HCT116 (cell line): ENCODE measurements at regions of chr12 and their contacts with region 1.

Region 1: DNA sequence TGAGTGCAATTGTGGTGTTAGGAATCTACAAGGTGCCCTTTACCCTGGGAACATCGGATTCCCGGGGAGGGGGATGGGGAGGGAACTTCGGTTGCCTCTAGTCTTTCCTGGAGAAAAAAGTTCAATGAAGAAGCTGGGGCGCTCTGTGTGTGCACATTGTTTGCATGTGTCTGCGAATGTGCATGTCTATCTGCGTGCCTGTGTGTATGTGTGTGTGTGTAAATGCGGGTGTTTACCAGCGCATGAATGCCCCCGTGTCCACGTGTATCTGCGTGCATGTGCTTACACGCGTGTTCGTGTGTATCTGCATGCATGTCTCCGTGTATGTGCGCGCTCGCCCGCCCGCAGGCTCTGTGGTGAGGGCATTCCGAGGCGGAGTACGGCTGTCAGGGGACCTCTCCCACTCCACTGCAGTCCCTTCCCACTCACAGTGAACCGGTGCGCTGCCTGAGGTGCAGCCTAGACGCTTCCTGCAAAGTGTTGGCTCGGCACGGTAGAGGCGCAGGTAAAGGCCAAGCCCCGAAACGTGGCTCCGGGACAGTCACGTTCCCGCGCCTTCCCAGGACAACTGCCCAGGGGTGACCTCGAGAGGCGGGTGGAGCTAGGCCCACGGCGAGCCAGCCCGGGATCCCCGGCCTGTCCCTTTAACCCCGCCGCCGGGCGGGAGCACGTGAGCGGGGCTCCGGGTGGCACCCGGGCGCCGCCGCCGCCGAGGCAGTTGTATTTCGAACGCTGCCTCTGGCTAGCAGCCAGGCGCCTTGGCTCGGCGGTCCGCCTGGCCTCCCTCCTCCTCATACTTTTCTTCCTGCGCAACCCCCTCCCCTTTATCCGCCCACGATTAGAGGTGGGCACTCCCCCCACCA is 539 bp upstream of the HMGA2 start:
- DNase-seq: peak; percentile 74
- ATAC-seq: peak; percentile 65
- H3K4me3 ChIP-seq: peak overlapping the region; percentile 83 to 85
- H3K27ac ChIP-seq: peak overlapping the region; percentile 100
- H3K4me1 ChIP-seq: peaks cover 54 to 81% of the 10 kb centered on the region in 2 experiments
- H3K27me3 ChIP-seq: no peaks in the 10 kb centered on the region
- CTCF ChIP-seq: no peak
- POLR2A ChIP-seq: peak; percentile 63
- RAD21 ChIP-seq: no peak

Region 2: GRCh38 chr12:65306366-65307168 is 517.2 kb before region 1 on chr12:
- CTCF ChIA-PET with region 1: interaction called, 3 read pairs
- POLR2A ChIA-PET with region 1: no interaction called
- RAD21 ChIA-PET with region 1: no interaction called
- intact Hi-C with region 1: loop called (anchors 2 kb)
- DNase-seq: peak; percentile 91
- ATAC-seq: peak; percentile 88
- H3K4me3 ChIP-seq: peak overlapping the region; percentile 28 to 35
- H3K27ac ChIP-seq: peak overlapping the region; percentile 95
- H3K4me1 ChIP-seq: peaks cover 38 to 73% of the 10 kb centered on the region in 2 experiments
- H3K27me3 ChIP-seq: no peaks in the 10 kb centered on the region
- CTCF ChIP-seq: peak; percentile 78 to 91 (median 88)
- POLR2A ChIP-seq: peak; percentile 43
- RAD21 ChIP-seq: peak; percentile 97

Region 3: GRCh38 chr12:65313719-65314317 is 509.9 kb before region 1 on chr12:
- CTCF ChIA-PET with region 1: no interaction called
- POLR2A ChIA-PET with region 1: interaction called, 3 read pairs
- RAD21 ChIA-PET with region 1: no interaction called
- intact Hi-C with region 1: loop called (anchors 2 kb)
- DNase-seq: peak; percentile 33
- ATAC-seq: peak; percentile 58; the same call in 1 of the 2 replicates
- H3K4me3 ChIP-seq: no peak overlapping the region; a peak in 1 of 4 replicates
- H3K27ac ChIP-seq: peak overlapping the region; percentile 95; the same call in 1 of the 2 replicates
- H3K4me1 ChIP-seq: peaks cover 41 to 91% of the 10 kb centered on the region in 2 experiments
- H3K27me3 ChIP-seq: no peaks in the 10 kb centered on the region
- CTCF ChIP-seq: peak; percentile 45 to 78 (median 73); a peak in 5 of 6 replicates
- POLR2A ChIP-seq: no peak
- RAD21 ChIP-seq: peak; percentile 94

Region 4: GRCh38 chr12:65556681-65557437 is 266.9 kb before region 1 on chr12:
- CTCF ChIA-PET with region 1: no interaction called
- POLR2A ChIA-PET with region 1: interaction called, 3 read pairs
- RAD21 ChIA-PET with region 1: no interaction called
- intact Hi-C with region 1: loop called (anchors 5 kb)
- DNase-seq: peak; percentile 80
- ATAC-seq: peak; percentile 98
- H3K4me3 ChIP-seq: no peak overlapping the region
- H3K27ac ChIP-seq: peak overlapping the region; percentile 53
- H3K4me1 ChIP-seq: peaks cover 7 to 45% of the 10 kb centered on the region in 2 experiments; a peak in 3 of 4 replicates
- H3K27me3 ChIP-seq: no peaks in the 10 kb centered on the region
- CTCF ChIP-seq: peak; percentile 67 to 94 (median 85); a peak in 5 of 6 replicates
- POLR2A ChIP-seq: no peak
- RAD21 ChIP-seq: peak; percentile 94

Region 5: GRCh38 chr12:65656904-65657351 is 166.8 kb before region 1 on chr12:
- CTCF ChIA-PET with region 1: no interaction called
- POLR2A ChIA-PET with region 1: interaction called, 11 read pairs
- RAD21 ChIA-PET with region 1: no interaction called
- intact Hi-C with region 1: loop called (anchors 2 kb)
- DNase-seq: peak; percentile 97
- ATAC-seq: peak; percentile 84
- H3K4me3 ChIP-seq: no peak overlapping the region
- H3K27ac ChIP-seq: peak overlapping the region; percentile 100
- H3K4me1 ChIP-seq: peaks cover 47 to 72% of the 10 kb centered on the region in 2 experiments
- H3K27me3 ChIP-seq: no peaks in the 10 kb centered on the region
- CTCF ChIP-seq: no peak
- POLR2A ChIP-seq: no peak
- RAD21 ChIP-seq: peak; percentile 56; the same call in 1 of the 2 replicates

Region 6: DNA sequence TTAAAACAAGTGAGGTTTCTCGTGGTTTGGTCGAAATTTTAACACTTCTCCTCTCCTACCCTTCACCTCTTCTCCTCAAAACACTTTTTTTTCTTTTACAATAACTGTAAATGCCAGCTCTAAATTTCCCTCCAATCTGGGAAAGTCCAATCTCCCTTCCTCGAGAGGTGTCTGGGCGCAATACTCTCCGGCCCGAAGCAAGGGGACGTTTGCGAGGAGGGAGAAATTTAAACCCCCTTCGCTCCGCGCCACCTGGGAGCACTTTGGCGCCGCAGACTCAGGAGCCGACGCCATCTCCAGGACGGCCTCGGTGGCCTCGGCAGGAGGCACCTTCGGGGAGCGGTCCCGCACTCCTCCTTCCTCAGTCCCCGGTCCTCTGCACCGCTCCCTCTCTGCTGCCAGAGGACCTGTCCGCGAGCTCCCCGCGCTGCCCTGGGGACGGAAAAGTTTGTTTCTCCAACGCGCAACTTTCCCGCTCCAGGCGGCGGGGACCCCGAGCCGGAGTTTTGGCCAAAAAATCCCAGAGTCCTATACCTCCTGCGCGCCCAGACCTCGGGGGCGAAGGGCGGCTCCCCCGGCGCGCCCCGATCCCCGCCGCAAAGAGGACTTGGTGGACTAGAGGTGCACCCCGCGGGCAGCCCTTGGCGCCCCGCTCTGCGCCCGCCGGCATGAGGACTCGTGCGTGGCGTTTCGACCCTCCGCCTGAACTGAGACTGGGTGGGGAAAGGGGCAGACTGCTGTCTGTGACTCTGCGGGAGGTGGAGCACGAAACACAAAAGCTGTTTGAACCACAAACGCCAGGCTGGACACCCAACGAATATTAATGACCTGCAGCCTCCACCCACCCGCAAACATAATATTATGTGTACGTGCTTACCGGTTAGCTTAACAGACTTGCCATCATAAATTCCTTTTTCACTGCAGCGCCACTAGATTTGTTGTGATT is 94.6 kb before region 1 on chr12:
- CTCF ChIA-PET with region 1: no interaction called
- POLR2A ChIA-PET with region 1: interaction called, 5 read pairs
- RAD21 ChIA-PET with region 1: no interaction called
- intact Hi-C with region 1: loop called (anchors 2 kb)
- DNase-seq: peak; percentile 59
- ATAC-seq: peak; percentile 71
- H3K4me3 ChIP-seq: peak overlapping the region; percentile 57 to 69
- H3K27ac ChIP-seq: peak overlapping the region; percentile 98
- H3K4me1 ChIP-seq: peaks cover 47 to 62% of the 10 kb centered on the region in 2 experiments
- H3K27me3 ChIP-seq: no peaks in the 10 kb centered on the region
- CTCF ChIP-seq: no peak
- POLR2A ChIP-seq: no peak
- RAD21 ChIP-seq: no peak

Region 7: GRCh38 chr12:65881965-65882413 is 58.2 kb after region 1 on chr12:
- CTCF ChIA-PET with region 1: no interaction called
- POLR2A ChIA-PET with region 1: no interaction called
- RAD21 ChIA-PET with region 1: no interaction called
- intact Hi-C with region 1: no loop called
- DNase-seq: no peak
- ATAC-seq: peak; percentile 9; the same call in 1 of the 2 replicates
- H3K4me3 ChIP-seq: no peak overlapping the region
- H3K27ac ChIP-seq: peak overlapping the region; percentile 81
- H3K4me1 ChIP-seq: peaks cover 99 to 100% of the 10 kb centered on the region in 2 experiments
- H3K27me3 ChIP-seq: no peaks in the 10 kb centered on the region
- CTCF ChIP-seq: no peak
- POLR2A ChIP-seq: no peak
- RAD21 ChIP-seq: no peak